Ovary (tissue), 10 donors: ENCODE measurements at regions of chr20 and their contacts with region 1.

Region 1: DNA sequence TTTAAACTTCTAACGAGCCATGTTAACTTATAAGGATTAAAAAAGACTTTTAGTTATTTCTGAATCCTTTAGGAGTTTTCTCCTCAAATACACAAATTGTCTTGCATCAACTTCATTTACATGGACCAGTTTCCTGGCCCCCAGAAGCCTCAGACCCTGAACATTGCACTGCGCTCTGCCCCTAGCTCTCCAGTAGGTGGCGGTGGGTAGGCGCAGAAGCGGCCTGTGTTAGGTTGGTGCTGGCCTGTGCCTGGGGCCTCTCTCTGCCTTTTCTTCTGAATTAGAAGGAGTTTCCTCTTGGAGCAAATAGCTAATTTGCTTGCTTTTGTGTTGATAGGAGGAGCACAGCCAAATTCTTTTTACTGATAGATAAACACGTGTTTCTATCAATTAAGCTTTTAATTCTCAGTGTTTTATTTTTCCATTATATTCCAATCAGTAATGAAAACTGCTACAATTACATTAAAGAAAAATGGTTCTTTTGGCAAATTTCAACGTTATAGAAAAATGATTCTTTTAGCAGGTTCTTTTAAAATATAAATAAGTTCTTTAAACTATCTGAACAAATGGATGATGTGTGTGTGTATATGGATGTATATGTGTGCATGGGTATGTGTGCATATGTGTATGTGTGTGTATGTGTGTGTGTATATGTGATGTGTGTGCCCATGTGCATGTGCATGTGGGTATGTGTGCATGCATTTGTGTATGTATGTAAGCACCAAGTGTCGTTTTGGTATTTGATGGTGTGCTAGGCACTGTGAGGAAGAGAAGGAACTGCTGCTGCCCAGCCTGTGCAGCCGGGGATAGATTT is 44.5 kb downstream of the DTD1 start:
- DNase-seq: peak; percentile 59 to 80 (median 70)
- H3K4me3 ChIP-seq: no peak overlapping the region
- H3K27ac ChIP-seq: no peak overlapping the region
- H3K4me1 ChIP-seq: no peaks in the 10 kb centered on the region
- H3K27me3 ChIP-seq: no peaks in the 10 kb centered on the region
- CTCF ChIP-seq: peak; percentile 50 to 67 (median 61)
- EP300 ChIP-seq: no peak
- POLR2A ChIP-seq: no peak

Region 2: GRCh38 chr20:18984238-18985200 is 352.1 kb after region 1 on chr20:
- intact Hi-C with region 1: loop called in 1 of 4 experiments (anchors 10 kb)
- DNase-seq: peak; percentile 73 to 84 (median 80)
- H3K4me3 ChIP-seq: no peak overlapping the region
- H3K27ac ChIP-seq: peak overlapping the region; percentile 68 to 76
- H3K4me1 ChIP-seq: peaks cover 19% of the 10 kb centered on the region
- H3K27me3 ChIP-seq: no peaks in the 10 kb centered on the region
- CTCF ChIP-seq: peak in 2 of 3 donors; percentile 35 to 49
- EP300 ChIP-seq: no peak
- POLR2A ChIP-seq: no peak

Region 3: DNA sequence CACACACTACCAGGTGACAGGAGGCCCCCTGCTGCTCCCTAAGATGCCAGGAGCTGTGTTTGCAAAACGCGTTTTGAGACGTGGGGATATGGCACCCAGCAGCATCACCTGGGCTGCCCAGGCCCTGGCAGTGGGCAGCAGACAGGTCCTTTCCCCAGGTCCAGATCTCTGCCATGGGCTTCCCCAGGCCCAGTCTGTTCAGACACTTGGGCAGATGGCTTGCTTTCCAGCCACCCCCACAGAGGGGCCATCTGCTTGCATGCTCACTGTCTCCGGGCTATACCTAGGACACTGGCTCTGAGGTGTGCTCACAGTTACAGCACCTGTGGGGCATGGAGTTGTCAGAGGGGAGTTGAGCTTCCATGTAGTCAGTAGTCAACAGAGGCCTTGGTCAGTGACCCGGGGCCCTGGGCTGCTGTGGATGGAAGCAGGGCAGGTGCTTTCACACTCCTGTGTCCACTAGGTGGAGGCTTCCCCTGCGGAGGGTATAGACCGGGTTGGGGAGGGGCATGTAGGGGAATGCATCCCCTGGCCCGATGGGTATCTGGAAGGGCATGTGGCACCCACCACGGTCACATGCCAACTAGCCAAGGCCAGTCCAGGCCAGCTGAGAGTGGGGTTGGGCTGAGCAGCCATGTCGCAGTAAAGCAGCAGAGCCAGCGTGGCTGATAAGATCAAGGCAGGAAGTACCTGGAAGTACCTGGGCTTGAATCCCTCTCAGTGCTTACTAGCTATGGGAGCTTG is 394.7 kb after region 1 on chr20:
- intact Hi-C with region 1: no loop called
- DNase-seq: no peak
- H3K4me3 ChIP-seq: no peak overlapping the region
- H3K27ac ChIP-seq: no peak overlapping the region
- H3K4me1 ChIP-seq: peaks cover 2% of the 10 kb centered on the region
- H3K27me3 ChIP-seq: no peaks in the 10 kb centered on the region
- CTCF ChIP-seq: no peak
- EP300 ChIP-seq: no peak
- POLR2A ChIP-seq: no peak

Region 4: GRCh38 chr20:19205977-19206396 is 573.6 kb after region 1 on chr20:
- intact Hi-C with region 1: loop called in 2 of 4 experiments (anchors 10 kb)
- DNase-seq: peak; percentile 67 to 85 (median 83)
- H3K4me3 ChIP-seq: no peak overlapping the region
- H3K27ac ChIP-seq: no peak overlapping the region
- H3K4me1 ChIP-seq: peaks cover 2% of the 10 kb centered on the region
- H3K27me3 ChIP-seq: no peaks in the 10 kb centered on the region
- CTCF ChIP-seq: peak; percentile 77 to 86 (median 84)
- EP300 ChIP-seq: no peak
- POLR2A ChIP-seq: no peak